H1 (cell line): ENCODE measurements at regions of chr5 and their contacts with region 1.

Region 1: DNA sequence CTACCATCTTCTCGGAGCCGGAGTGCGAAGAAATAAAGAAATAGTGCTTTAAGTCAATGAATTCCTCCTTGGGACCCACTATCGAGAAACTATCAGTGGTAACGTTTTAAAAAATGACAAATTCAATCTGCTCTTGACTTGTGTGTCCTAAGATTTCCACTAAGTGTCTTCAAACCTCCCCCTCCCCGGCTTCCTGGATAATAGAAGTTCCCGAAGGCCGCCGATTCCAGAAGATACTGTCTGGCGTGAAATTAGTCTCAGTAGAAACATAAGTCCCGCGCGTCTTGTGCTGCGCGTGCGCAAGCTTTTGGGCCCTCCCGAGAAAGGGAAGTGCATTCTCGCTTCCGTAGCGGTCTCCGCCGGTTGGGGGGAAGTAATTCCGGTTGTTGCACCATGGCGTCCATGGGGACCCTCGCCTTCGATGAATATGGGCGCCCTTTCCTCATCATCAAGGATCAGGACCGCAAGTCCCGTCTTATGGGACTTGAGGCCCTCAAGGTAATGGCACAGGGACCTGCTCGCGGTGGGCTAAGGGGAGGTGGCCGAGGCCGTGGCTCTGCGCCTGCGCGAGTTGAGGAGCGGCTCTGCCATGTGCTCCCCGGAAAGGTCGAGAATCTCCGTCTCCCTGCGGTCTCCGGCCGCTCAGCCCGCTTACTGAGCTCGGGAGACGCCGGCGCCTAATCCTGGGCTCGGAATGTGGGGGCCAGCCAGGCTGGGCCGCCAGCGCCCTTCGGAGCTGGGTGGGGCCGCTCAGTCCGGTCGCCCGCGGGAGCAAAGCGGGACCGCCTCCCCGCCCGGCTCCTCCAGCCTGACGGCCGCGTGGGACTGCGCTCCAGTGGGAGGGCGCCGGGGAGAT is at the start of gene CCT5:
- DNase-seq: peak; percentile 77 to 88
- H3K4me3 ChIP-seq: peak within 1 kb of the TSS; percentile 92 to 100 (median 94)
- H3K27ac ChIP-seq: peak within 1 kb of the TSS; percentile 96
- H3K4me1 ChIP-seq: peaks cover 3 to 7% (median 5%) of the 10 kb centered on the region in 4 experiments; a peak in 4 of 7 replicates
- H3K27me3 ChIP-seq: no peaks in the 10 kb centered on the region
- CTCF ChIP-seq: no peak
- EP300 ChIP-seq: peak in 1 of 2 experiments; percentile 97; a peak in 2 of 3 replicates
- POLR2A ChIP-seq: peak; percentile 86 to 91
- RAD21 ChIP-seq: no peak
- total RNA-seq, gene CCT5: 509 and 549 TPM in 2 replicates

Region 2: DNA sequence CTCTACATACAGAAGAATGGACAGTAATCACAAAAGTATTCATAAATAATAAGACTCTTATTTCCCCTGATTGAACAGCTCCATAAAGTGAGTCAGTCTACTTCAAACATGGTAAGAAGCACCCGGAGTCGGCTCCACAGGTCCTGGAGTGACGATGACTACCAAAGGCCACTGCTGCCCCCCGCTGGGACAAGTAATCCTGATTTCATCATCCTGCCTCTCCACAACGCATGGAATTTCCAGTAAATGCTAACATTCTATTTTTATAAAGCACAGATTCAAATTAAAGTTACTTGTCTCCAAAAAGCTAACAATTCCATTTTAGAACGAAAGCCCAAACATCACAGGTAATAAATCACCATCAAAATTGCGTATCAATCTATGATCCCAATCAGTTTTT is 16.7 kb before region 1 on chr5:
- CTCF ChIA-PET with region 1: no interaction called
- POLR2A ChIA-PET with region 1: interaction called, 10 read pairs
- DNase-seq: no peak
- H3K4me3 ChIP-seq: no peak overlapping the region
- H3K27ac ChIP-seq: no peak overlapping the region
- H3K4me1 ChIP-seq: no peaks in the 10 kb centered on the region
- H3K27me3 ChIP-seq: no peaks in the 10 kb centered on the region
- CTCF ChIP-seq: peak; percentile 7 to 18 (median 11); a peak in 3 of 4 replicates
- EP300 ChIP-seq: no peak
- POLR2A ChIP-seq: no peak
- RAD21 ChIP-seq: peak; percentile 54 to 58

Region 3: DNA sequence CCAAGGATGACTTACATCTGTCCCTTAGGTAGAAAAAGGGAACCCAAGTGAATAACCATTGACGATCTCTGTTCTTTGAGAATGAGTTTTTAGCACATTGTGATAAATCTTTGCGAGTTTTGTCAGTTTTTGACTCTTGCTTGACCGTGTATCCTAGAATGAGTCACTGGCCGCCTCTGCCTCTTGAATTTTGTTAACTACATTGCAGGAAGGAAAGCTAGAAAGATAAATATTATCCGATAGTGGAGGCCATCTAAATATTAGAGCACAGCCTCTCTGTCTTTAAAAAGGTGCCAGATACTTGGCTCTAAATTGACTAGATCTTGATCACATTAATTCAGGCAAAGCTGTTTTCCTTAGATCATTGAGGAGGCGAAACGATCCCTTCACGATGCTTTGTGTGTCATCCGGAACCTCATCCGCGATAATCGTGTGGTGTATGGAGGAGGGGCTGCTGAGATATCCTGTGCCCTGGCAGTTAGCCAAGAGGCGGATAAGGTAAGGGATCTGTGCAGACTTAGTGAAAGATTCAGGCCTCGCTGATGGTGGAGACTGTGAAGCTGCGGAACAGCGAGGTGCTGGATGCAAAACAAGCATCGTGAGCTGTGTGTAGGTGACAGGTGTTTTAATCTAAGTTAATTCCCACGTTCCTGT is 12.1 kb after region 1 on chr5:
- CTCF ChIA-PET with region 1: interaction called, 3 read pairs
- POLR2A ChIA-PET with region 1: interaction called, 128 read pairs
- DNase-seq: no peak
- H3K4me3 ChIP-seq: no peak overlapping the region
- H3K27ac ChIP-seq: no peak overlapping the region
- H3K4me1 ChIP-seq: no peaks in the 10 kb centered on the region
- H3K27me3 ChIP-seq: no peaks in the 10 kb centered on the region
- CTCF ChIP-seq: no peak
- EP300 ChIP-seq: no peak
- POLR2A ChIP-seq: no peak
- RAD21 ChIP-seq: no peak

Region 4: GRCh38 chr5:10272053-10272869 is 22.1 kb after region 1 on chr5:
- CTCF ChIA-PET with region 1: interaction called, 4 read pairs
- POLR2A ChIA-PET with region 1: interaction called, 128 read pairs
- DNase-seq: no peak
- H3K4me3 ChIP-seq: no peak overlapping the region
- H3K27ac ChIP-seq: no peak overlapping the region
- H3K4me1 ChIP-seq: peaks cover 2 to 10% (median 6%) of the 10 kb centered on the region in 4 experiments; a peak in 6 of 7 replicates
- H3K27me3 ChIP-seq: no peaks in the 10 kb centered on the region
- CTCF ChIP-seq: no peak
- EP300 ChIP-seq: no peak
- POLR2A ChIP-seq: no peak
- RAD21 ChIP-seq: no peak

Region 5: DNA sequence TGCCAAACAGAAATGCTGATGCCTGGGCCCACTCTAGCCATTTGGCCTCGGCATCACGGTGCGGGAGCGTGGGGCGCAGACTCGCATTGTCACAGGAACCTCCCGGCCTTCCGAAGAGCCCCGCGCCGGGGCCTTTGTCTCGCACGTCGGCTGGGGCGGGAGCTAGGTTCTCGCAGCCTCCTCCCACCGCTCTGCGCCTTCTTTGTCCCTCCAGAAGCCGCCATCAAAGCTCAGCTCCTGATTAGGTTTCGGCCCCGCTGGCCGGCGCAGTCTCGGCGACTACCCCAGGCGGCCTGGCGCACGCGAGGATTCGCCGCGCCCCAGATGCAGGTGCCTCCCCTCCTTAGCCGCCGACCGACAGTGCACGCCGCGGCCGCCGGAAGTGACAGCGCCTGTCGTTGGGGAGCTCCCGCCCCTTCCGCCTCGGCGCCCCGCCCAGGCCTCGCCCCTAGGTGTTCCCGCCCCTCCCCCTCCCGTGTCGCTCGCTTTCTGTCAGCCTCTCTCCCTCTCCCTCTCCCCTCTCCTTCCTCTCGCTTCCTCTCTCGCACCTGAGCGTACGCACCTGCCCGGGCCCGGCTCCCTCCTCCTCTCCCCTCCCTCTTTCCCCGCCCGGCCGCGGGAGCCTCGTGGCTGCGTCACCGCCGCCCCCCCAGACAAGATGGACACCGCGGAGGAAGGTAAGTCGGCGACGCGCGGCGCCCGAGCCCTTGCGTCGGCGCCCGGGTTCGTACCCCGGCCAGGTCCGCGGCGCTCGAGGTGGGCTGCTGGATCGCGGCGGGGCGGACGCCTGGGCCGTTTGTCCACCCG is 103.3 kb after region 1 on chr5 and contains the start of gene MARCHF6:
- CTCF ChIA-PET with region 1: no interaction called
- POLR2A ChIA-PET with region 1: interaction called, 17 read pairs
- DNase-seq: peak; percentile 86 to 92
- H3K4me3 ChIP-seq: peak within 1 kb of the TSS; percentile 88 to 89 (median 89)
- H3K27ac ChIP-seq: peak within 1 kb of the TSS; percentile 90
- H3K4me1 ChIP-seq: peaks cover 2 to 11% (median 6%) of the 10 kb centered on the region in 4 experiments; a peak in 6 of 7 replicates
- H3K27me3 ChIP-seq: peaks cover 0 to 6% (median under 1%) of the 10 kb centered on the region in 4 experiments; a peak in 1 of 7 replicates
- CTCF ChIP-seq: no peak
- EP300 ChIP-seq: peak in 1 of 2 experiments; percentile 77; a peak in 1 of 3 replicates
- POLR2A ChIP-seq: peak; percentile 84 to 89
- RAD21 ChIP-seq: no peak
- total RNA-seq, gene MARCHF6: 109 and 118 TPM in 2 replicates

Region 6: DNA sequence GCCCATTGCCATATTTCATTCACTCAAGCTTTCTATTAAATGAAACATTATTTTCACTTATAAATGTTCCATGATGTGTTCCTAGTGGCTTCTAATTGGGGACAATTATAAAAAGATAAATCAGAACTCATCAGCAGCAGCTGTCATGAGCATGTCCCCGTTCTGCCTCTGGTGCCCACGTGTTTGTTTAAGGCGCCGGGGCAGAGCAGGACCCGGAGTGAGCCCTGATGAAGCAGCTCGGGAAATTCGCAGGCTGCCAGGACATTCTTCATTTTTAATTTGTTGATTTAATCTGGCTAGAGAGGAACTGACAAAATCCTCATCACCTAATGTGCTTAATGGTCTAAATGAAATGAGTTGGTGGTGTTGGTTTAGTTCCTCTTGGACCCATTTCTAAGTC is 1179.1 kb after region 1 on chr5:
- CTCF ChIA-PET with region 1: no interaction called
- POLR2A ChIA-PET with region 1: no interaction called
- DNase-seq: no peak
- H3K4me3 ChIP-seq: no peak overlapping the region
- H3K27ac ChIP-seq: no peak overlapping the region
- H3K4me1 ChIP-seq: no peaks in the 10 kb centered on the region
- H3K27me3 ChIP-seq: no peaks in the 10 kb centered on the region
- CTCF ChIP-seq: no peak
- EP300 ChIP-seq: no peak
- POLR2A ChIP-seq: no peak
- RAD21 ChIP-seq: no peak